ENCODE measurements at regions of chr11 and their contacts with region 1.

Region 1: GRCh38 chr11:128831174-128832120 is 35.6 kb downstream of the KCNJ1 start:
- DNase-seq: peak; percentile 72
- CTCF ChIP-seq: peak; percentile 90

Region 2: DNA sequence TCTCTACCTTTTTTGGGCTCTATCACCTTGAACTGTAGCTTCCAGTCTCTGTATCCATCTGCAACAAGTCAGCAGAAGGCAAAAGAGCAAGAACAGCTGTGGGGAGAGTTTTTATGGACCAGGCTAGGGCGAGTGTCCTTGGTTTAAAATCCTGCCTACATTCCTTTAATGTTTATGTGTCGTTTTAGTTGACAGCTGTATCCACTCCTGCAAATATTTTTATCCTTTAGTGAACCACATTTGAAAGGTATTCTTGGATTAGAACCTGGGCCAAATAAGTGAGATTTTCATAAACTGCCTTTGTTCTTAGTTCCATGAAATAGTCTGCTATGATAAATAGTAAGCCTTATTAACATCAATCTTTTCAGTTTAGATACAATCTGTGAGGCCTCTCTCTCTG is 956.3 kb before region 1 on chr11:
- CTCF ChIA-PET with region 1: no interaction called
- POLR2A ChIA-PET with region 1: no interaction called
- DNase-seq: no peak
- CTCF ChIP-seq: no peak

Region 3: GRCh38 chr11:128172046-128172878 is 659.2 kb before region 1 on chr11:
- CTCF ChIA-PET with region 1: interaction called, 48 read pairs
- POLR2A ChIA-PET with region 1: no interaction called
- DNase-seq: peak; percentile 78
- CTCF ChIP-seq: peak; percentile 84

Region 4: DNA sequence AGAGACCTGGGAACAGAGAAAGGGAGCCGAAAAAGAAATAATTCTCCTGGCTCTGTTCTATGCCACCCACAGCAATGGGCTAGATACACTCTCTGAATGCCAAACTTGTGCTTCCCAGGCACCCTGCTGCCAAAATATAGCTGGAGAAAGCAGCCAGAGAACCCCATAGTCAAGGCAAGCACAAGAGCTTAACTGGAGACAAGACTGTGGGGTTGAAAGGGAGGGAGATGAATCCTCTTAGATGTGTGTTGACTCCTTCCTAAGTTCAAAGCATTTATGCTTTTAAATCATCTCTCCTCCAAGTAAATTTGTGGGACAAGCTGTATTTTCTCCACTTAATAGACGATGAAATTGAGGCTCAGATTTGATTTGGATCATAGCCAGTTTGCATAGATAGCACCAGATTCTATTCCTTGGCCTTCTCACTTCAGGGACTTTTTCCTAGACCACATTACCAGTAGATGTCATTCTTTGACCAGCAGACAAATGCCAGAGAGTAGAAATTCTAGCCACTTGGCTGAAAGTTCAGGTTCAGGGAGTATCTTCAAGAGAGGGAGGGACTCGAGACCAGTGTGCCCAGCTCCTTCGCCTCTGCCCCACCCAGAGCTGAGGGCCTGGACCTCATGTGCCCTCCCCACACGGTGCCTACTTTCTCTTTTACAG is 227.6 kb before region 1 on chr11:
- CTCF ChIA-PET with region 1: interaction called, 13 read pairs
- POLR2A ChIA-PET with region 1: no interaction called
- DNase-seq: peak; percentile 25
- CTCF ChIP-seq: peak; percentile 40

Region 5: DNA sequence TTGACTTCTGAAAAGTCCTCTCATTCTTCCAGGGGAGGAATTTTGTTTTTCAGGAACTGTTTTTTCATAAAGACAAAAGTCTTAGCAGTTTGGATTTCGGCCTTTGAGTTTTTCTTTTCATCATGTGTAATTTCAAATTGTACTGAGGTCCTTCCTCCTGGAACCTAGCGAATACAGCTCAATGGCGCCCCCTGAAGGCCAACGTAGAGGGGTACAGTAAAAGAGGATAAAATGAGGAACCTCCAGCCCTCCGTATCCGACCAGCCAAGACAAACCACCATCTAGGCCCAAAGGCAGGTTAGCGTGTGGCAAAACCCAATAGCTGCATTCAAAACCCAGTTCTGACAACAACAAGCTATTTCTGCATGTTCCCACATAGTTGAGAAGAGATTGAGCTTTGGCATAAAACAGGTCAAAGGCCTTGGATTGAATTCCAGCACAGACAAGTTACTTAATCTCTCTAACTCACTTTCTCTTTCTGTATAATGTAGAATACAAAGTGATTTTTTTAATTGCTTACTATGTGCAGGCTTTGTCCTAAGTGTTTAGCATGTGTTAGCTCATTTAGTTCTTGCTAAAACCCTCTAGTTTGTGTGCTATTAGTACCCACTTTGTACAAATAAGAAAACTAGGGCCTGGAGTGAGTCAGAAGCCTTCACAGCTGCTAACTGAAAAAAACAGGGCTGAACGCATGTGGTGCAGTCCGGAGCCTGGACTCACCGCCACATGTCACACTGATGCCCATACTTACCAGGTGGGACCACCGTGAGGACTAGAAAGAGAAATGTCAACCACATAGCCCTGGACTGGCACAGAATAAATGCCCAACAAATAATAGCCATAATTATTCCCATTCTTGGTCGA is 200.8 kb before region 1 on chr11:
- CTCF ChIA-PET with region 1: interaction called, 21 read pairs
- POLR2A ChIA-PET with region 1: no interaction called
- DNase-seq: peak; percentile 77
- CTCF ChIP-seq: peak; percentile 79

Region 6: DNA sequence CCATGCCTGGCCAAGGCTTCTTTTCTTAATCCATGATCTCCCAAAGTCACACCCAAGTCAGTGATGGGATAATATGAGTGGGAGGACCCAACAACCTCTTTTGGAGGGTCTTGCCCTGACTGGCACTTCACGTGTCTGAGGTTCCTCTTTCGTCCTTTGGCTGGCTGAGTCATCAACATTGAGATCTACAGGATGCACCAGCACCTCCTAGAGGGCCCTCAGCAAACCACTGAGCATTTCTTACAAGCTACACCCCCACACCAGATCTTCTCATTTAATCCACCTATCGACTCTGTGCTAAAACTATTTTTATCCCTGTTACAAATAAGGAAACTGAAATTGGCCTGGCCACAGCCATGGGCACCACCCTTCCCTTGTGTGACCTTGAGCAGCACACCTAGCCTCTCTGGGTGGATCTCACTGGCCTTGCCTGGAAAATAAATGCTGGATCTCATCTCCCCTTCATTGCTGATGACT is 74.2 kb before region 1 on chr11:
- CTCF ChIA-PET with region 1: interaction called, 11 read pairs
- POLR2A ChIA-PET with region 1: no interaction called
- DNase-seq: peak; percentile 82
- CTCF ChIP-seq: peak; percentile 75

Region 7: DNA sequence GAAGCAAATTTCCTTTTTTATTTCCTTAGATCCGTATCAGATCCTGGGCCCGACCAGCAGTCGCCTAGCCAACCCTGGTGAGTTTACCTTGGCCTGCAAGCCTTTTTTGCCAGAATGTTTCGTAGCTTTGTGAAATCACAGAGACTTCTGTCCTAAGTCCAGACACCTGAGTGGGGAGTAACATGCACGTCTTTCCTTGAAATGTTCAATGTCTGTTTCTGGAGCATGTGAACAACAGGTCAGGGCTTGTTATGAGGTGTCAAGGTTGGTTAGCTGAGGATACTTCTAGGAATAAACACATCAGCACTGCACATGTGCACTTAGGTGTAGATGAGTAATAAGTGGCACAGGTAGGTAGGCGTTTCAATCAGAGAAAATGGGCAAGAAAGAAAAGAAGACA is 22.3 kb before region 1 on chr11:
- CTCF ChIA-PET with region 1: interaction called, 25 read pairs
- POLR2A ChIA-PET with region 1: no interaction called
- DNase-seq: no peak
- CTCF ChIP-seq: no peak

Region 8: DNA sequence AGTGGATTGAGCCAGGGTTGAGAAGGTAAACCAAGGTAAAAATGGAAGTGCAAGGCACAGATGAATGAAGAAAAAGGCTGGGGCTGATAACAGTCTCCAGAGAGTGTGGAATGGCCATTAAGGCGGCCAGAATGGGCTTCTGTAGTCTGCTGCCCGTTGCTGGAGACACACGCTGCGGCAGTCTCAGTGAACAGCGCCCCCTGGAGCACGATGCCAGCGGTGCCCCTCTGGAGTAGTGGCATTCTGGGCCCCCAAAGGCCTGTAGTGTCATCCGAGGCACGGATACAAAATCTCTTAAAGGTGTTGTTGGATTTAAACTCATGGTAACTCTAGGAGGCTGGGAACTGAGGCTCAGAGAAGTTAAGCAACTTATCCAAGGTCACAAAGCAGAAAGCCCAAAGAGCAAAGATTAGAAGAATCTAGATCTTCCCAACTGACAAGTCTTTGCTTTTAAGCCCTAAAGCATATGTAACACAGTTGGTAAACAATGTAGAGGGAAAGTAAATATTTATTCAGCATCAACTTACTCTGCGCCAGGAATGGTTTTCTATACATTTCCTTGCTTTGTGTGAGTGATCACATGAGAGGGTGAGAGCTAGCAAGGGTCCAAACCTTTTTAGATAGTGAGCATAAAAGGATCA is 17.5 kb after region 1 on chr11:
- CTCF ChIA-PET with region 1: interaction called, 40 read pairs
- POLR2A ChIA-PET with region 1: no interaction called
- DNase-seq: peak; percentile 74
- CTCF ChIP-seq: peak; percentile 82

Region 9: GRCh38 chr11:128948589-128948988 is 117.1 kb after region 1 on chr11:
- CTCF ChIA-PET with region 1: no interaction called
- POLR2A ChIA-PET with region 1: no interaction called
- DNase-seq: no peak
- CTCF ChIP-seq: peak; percentile 10

Measured in GM10248 (cell line).